Activated CD4-positive, alpha-beta T cell treated with anti-CD3 and anti-CD28 coated beads for 36 hours (primary cell): ENCODE measurements at regions of chr6 and their contacts with region 1.

Region 1: GRCh38 chr6:33248925-33249731 is 22.5 kb downstream of the VPS52 start:
- DNase-seq: peak; percentile 99
- ATAC-seq: peak; percentile 93
- H3K4me3 Mint-ChIP-seq: peak overlapping the region; percentile 91
- H3K27ac Mint-ChIP-seq: peak overlapping the region; percentile 96
- H3K4me1 Mint-ChIP-seq: peaks cover 41% of the 10 kb centered on the region
- H3K27me3 Mint-ChIP-seq: peaks cover 3% of the 10 kb centered on the region

Region 2: DNA sequence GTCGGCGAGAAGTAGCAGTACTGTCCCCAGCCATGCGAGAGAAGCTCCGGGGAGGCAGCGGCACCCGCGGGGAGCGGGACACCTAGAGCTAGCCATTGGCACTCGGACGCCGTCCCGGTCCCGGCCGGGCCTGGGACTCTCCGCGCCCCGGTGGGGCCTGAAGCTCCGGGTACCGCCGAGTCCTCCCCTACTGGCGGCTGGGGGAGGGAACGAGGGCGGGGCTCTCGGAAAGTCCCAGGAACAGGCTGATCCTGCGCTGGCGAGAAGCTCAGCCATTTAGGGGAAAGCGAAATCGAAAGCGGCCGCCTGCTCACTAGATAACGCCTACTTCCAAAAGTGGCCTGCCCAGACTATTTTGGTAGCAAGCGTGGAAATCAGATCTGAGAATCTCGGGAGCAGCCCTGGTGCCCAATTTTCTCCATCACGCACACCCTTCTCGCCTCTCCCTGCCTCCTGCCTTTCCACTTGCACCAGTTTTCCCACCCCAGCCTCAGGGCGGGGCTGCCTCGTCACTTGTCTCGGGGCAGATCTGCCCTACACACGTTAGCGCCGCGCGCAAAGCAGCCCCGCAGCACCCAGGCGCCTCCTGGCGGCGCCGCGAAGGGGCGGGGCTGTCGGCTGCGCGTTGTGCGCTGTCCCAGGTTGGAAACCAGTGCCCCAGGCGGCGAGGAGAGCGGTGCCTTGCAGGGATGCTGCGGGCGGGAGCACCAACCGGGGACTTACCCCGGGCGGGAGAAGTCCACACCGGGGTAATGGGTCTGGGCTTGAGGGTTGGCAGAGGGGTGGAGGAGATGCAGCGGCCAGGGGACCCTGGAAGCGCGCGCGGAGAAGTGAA is 395.4 kb before region 1 on chr6 and contains the starts of genes PSMB9 and TAP1:
- CTCF ChIA-PET with region 1: no interaction called
- POLR2A ChIA-PET with region 1: no interaction called
- intact Hi-C with region 1: loop called in 1 of 2 experiments (anchors 1 kb)
- DNase-seq: peak; percentile 98
- ATAC-seq: peak; percentile 84
- H3K4me3 Mint-ChIP-seq: peak within 1 kb of the TSS; percentile 100
- H3K27ac Mint-ChIP-seq: peak within 1 kb of the TSS; percentile 99
- H3K4me1 Mint-ChIP-seq: peaks cover 62% of the 10 kb centered on the region
- H3K27me3 Mint-ChIP-seq: no peaks in the 10 kb centered on the region
- total RNA-seq, gene PSMB9: 210 to 282 TPM
- total RNA-seq, gene TAP1: 191 to 255 TPM

Region 3: GRCh38 chr6:33118525-33119123 is 130.5 kb before region 1 on chr6:
- CTCF ChIA-PET with region 1: interaction called, 77 read pairs
- POLR2A ChIA-PET with region 1: interaction called, 3 read pairs
- intact Hi-C with region 1: loop called (anchors 1 kb)
- DNase-seq: no peak
- ATAC-seq: peak; percentile 55
- H3K4me3 Mint-ChIP-seq: no peak overlapping the region
- H3K27ac Mint-ChIP-seq: no peak overlapping the region
- H3K4me1 Mint-ChIP-seq: peaks cover 7% of the 10 kb centered on the region
- H3K27me3 Mint-ChIP-seq: peaks cover 31% of the 10 kb centered on the region

Region 4: DNA sequence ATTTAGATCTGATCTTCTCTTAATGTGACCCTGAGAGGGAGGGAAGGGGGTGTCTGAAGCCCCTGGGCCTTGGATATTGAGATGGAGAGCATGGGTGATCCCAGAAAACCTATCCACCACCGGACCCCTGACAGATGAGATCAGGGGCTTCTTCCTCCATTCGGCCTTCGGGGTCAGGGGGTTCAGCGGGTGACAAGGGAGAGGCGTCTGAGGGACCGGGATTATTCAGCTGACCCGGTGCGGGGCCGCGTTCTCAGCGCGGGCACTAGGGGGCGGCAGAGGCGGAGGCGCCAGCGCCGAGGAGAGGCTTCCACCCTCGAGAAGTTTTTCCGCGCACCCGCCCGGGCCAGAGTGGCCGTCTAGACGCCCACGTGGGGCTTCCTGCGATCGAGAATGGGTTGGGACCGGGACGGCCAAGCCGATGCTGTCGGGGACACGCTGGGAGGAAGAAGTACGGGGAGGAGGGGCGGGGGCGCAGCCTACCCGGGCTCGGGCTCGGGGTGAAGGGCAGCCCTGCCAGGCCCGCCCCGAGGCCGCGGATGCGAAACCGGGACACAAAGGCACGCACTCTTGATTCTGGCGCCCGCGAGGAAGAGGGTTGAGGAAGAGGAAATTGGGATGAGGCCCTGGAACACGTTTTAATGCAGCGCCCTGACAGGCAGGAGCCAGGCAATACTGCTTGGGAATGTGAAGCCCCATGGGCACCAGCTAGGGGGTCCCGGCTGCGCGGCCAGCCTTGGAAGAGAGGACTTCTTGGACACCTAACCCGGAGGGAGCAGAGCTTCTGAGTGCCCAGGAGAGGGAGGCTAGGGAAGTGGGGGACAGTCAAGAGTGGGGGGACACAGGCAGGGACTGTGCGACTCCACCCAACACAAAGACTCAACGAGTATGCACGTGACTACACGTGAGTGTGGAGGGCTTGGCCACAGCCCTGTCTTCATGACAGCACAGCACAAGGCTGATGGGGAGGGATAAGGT is 87.5 kb before region 1 on chr6:
- CTCF ChIA-PET with region 1: interaction called, 41 read pairs
- POLR2A ChIA-PET with region 1: no interaction called
- intact Hi-C with region 1: loop called (anchors 1 kb)
- DNase-seq: peak; percentile 90
- ATAC-seq: peak; percentile 95
- H3K4me3 Mint-ChIP-seq: peak overlapping the region; percentile 71
- H3K27ac Mint-ChIP-seq: peak overlapping the region; percentile 43
- H3K4me1 Mint-ChIP-seq: peaks cover 10% of the 10 kb centered on the region
- H3K27me3 Mint-ChIP-seq: peaks cover 4% of the 10 kb centered on the region

Region 5: DNA sequence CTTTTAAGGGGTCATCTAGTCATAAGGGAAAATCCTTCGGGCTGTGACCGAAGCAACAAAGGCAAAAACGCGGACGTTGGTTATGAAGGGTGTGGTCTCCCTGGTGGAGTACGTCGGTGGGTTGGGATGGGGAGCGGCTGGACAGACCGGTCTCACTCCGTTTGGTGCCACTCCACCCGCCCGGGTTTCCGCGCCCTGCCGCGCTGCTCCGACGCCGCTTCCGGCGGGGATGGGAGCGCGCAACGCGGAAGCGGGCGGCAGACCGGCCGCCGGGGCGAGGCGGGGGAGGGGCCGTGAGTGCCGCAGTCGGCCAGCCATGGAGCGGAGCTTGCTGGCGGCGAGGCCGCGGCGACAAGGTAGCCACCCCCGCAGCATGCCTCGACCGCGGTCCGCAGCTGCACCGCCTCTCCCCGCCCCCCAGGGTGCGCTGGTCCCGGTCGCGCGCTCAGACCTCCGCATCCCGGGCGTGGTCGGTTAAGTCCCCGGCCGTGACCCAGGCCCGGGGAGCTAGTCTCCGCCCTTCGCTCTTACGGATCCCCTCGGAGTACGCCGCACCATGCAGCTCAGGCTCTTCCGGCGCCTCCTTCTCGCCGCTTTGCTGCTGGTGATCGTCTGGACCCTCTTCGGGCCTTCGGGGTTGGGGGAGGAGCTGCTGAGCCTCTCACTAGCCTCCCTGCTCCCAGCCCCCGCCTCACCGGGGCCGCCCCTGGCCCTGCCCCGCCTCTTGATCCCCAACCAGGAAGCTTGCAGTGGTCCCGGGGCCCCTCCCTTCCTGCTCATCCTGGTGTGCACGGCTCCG is 27.9 kb after region 1 on chr6 and contains the start of gene B3GALT4:
- CTCF ChIA-PET with region 1: interaction called, 14 read pairs
- POLR2A ChIA-PET with region 1: interaction called, 11 read pairs
- intact Hi-C with region 1: no loop called
- DNase-seq: peak; percentile 87
- ATAC-seq: peak; percentile 75
- H3K4me3 Mint-ChIP-seq: peak within 1 kb of the TSS; percentile 91
- H3K27ac Mint-ChIP-seq: peak within 1 kb of the TSS; percentile 92
- H3K4me1 Mint-ChIP-seq: peaks cover 39% of the 10 kb centered on the region
- H3K27me3 Mint-ChIP-seq: no peaks in the 10 kb centered on the region
- total RNA-seq, gene B3GALT4: 2.8 to 3.5 TPM

Region 6: DNA sequence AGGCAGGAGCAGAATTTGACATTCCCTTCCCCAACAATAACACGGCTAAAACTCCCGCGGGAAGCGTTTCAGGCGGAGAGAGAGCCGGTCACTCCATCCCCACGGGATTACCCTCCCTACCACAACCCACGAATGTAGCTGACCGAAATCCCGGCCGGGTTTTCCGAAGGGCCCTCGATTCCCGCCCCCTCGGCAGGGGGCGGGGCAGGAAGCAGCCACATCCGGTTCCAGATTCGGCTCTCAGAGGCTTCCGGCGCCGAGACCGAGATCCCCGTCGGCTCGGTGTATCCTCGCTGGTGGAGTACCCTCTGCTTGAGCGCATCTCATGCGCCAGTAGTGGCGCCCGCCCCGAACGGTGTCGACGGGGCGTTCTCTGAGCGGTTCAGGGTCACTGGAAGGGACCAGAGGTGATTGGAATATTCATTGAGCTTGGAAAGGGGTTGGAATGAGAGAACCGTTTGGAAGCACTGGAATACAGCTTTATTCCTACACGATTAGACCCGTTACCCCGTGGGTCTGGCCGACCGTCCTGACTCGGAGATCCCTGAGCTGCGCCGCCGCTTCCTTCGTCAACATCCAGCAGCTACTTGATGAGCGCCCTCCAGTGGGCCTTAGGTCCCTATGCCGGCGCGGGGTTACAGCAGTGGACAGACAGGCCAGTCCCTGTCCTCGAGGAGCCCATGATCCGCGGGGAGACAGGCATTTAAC is 50.3 kb after region 1 on chr6:
- CTCF ChIA-PET with region 1: interaction called, 3 read pairs
- POLR2A ChIA-PET with region 1: no interaction called
- intact Hi-C with region 1: loop called in 1 of 2 experiments (anchors 1 kb)
- DNase-seq: peak; percentile 97
- ATAC-seq: peak; percentile 87
- H3K4me3 Mint-ChIP-seq: peak overlapping the region; percentile 80
- H3K27ac Mint-ChIP-seq: peak overlapping the region; percentile 98
- H3K4me1 Mint-ChIP-seq: peaks cover 28% of the 10 kb centered on the region
- H3K27me3 Mint-ChIP-seq: no peaks in the 10 kb centered on the region

Region 7: GRCh38 chr6:33323623-33323948 is 74.5 kb after region 1 on chr6:
- CTCF ChIA-PET with region 1: interaction called, 3 read pairs
- POLR2A ChIA-PET with region 1: no interaction called
- intact Hi-C with region 1: loop called in 1 of 2 experiments (anchors 1 kb)
- DNase-seq: no peak
- ATAC-seq: no peak
- H3K4me3 Mint-ChIP-seq: peak overlapping the region; percentile 99
- H3K27ac Mint-ChIP-seq: peak overlapping the region; percentile 99
- H3K4me1 Mint-ChIP-seq: peaks cover 46% of the 10 kb centered on the region
- H3K27me3 Mint-ChIP-seq: no peaks in the 10 kb centered on the region